Dorsolateral prefrontal cortex (tissue), 120 donors: ENCODE measurements at regions of chr22 and their contacts with region 1.

Region 1: DNA sequence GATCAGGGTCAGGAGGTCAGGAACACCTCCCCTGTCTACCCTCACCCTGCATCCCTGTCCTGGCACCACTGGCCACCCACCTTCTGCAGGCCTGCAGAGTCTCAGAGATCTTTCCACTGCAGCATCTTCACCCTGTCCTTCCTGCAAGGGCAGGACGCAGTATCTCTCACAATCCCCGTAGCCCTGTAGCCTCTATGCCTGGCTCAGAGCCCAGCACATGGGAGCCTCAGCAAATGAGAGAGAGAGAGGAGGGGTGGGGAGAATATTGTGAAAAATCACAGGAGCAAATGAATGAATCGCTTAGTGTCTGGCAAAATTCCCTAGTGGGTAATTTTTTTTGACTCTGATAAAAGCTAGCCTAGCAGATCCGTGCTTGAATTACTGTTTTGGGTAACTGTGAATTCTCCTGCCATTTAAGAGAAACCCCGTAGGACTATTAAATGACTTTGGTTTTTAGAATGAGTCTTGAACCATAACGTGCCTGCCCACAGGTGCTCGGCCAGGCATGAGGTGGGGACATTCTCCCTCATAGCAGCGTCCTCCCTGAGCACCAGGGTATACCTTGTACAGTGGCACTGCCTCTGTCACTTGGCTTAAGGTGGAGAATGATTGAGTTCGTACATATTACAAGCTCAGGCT is 91.5 kb downstream of the MORC2 start:
- DNase-seq: peak; percentile 40 to 83 (median 73)
- H3K4me3 ChIP-seq: no peak overlapping the region
- H3K27ac ChIP-seq: peak overlapping the region in 29 of 59 donors; percentile 2 to 82 (median 49)
- H3K27me3 ChIP-seq: no peaks in the 10 kb centered on the region
- CTCF ChIP-seq: no peak

Region 2: DNA sequence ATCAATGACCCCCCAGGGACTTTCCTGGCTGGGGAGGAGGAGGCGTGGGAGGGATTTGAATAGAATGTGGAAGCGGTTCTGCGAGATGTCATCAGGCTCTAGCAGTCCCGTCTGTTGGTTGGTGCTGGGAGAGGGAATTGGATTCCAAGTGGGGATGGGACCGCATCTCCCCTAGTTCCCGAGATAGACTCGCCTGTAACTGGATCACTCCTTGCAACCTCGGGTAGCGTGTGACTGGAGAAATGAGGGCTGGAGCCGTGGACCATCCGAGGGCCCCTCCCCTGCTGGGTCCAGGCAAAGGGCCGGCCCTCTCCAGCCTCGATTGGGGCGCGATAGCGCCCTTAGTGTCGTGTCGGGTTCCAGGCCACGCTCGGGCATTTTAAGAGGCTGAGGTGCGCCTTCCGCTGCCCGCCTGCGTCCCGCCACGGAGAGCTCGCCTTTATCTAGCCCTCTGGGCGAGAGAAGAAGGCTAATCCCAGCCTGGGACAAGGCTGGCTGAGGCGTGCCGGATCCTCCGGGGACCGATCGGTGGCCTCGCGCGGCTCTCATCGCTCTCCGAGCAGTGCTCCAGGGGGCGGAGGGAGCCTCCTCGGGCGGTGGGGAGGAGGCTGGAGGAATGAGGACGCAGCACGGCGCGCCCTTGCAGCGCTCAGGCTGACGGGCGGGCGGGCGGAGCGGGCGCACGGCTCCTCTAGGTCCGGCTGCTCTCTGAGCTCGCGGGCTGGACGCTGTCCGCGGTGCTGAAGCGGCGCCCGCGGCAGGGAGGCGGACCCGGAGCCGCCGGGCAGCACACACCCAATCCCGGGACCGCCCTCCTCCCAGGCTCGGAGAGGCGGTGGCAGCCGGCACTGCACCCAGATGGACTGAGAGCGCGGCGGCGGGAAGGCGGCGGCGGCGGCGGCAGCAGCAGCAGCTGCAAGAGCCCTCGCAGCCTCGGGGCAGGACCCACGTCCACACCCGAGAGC is 74.5 kb before region 1 on chr22:
- intact Hi-C with region 1: loop called (anchors 5 kb)
- DNase-seq: peak; percentile 52 to 89 (median 67)
- H3K4me3 ChIP-seq: peak overlapping the region; percentile 13 to 72 (median 53)
- H3K27ac ChIP-seq: peak overlapping the region in 37 of 59 donors; percentile 0 to 81 (median 51)
- H3K27me3 ChIP-seq: no peaks in the 10 kb centered on the region
- CTCF ChIP-seq: peak in 52 of 56 donors; percentile 14 to 66 (median 48)

Region 3: GRCh38 chr22:30830907-30831306 is 46.1 kb before region 1 on chr22:
- intact Hi-C with region 1: loop called in 1 of 2 experiments (anchors 5 kb)
- DNase-seq: peak in 2 of 10 donors; percentile 27 to 39
- H3K4me3 ChIP-seq: no peak overlapping the region
- H3K27ac ChIP-seq: peak overlapping the region in 29 of 59 donors; percentile 0 to 77 (median 46)
- H3K27me3 ChIP-seq: no peaks in the 10 kb centered on the region
- CTCF ChIP-seq: no peak

Region 4: DNA sequence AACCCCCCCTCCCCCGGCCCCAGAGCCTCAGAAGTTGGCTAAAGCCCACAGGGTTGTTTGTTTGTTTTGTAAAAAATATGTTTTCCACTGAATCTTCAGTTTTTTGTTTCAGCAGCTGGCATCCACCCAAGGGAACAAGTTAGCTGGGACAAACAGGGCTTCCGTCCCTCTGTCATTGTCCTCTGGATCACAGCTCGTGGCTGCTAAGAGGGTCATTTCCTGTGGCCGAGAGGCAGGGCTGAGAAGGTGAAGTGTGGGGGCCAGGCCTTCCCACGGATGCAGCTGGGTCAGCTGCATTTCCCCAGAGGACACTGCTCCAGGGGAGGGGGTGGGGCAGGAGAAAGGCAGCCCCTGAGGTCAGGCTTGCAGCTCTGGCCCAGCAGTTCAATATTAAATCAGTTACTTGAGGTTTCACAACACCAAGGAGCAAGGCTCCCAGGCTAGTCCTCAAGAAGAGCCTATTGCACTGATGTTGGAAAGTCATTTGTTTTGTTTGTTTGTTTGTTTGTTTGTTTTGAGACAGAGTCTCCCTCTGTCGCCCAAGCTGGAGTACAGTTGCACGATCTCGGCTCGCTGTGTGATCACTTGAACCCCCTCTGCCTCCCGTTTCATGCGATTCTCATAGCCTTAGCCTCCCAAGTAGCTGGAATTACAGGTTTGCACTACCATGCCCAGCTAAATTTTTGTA is 169.6 kb after region 1 on chr22:
- intact Hi-C with region 1: no loop called
- DNase-seq: no peak
- H3K4me3 ChIP-seq: no peak overlapping the region
- H3K27ac ChIP-seq: peak overlapping the region in 29 of 59 donors; percentile 5 to 71 (median 41)
- H3K27me3 ChIP-seq: no peaks in the 10 kb centered on the region
- CTCF ChIP-seq: no peak